Activated CD8-positive, alpha-beta T cell treated with anti-CD3 and anti-CD28 coated beads, Interleukin-2, amount 10 ng/mL, durations not matched to agents 7 days and 5 days (primary cell): ENCODE measurements at regions of chr4 and their contacts with region 1.

Region 1: DNA sequence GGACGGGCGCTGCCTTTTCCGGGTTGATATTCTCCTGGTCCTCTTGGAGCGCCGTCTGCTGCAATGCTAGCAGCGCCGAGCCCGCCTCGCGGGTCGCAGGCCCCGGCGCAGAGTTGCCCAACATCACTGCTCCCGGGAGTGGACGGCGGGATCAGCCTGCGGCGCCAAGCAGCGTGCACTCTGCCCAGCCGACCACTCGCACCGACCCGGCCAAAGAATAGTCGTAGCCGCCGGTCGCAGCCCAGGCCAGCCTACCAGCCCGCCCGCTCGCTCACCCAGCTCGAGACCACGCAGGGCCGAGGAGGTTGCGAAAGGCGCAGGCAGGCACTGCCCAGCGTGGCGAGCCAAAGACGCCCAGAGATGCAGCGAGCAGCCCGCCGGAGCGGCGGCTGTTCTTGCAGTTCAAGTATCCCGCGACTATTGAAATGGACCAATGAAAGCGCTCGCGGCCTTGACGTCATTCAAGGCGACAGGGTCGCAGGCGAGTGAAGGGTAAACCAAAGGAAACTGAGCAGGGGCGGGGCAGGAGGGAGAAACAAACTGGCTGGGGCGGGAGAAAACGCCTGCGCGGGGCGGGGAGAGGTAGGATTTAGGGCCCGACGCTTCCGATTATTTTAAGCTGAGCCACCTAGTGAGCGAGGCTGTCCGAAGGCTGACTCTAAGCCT is at the start of gene CCNA2:
- DNase-seq: peak; percentile 99
- ATAC-seq: peak; percentile 94
- H3K4me3 Mint-ChIP-seq: peak within 1 kb of the TSS; percentile 97
- H3K27ac Mint-ChIP-seq: peak within 1 kb of the TSS; percentile 98
- H3K4me1 Mint-ChIP-seq: peaks cover 34% of the 10 kb centered on the region
- H3K27me3 Mint-ChIP-seq: no peaks in the 10 kb centered on the region
- total RNA-seq, gene CCNA2: 131 to 132 TPM

Region 2: GRCh38 chr4:121777625-121778024 is 46.0 kb before region 1 on chr4:
- CTCF ChIA-PET with region 1: no interaction called
- POLR2A ChIA-PET with region 1: no interaction called
- DNase-seq: no peak
- ATAC-seq: no peak
- H3K4me3 Mint-ChIP-seq: no peak overlapping the region
- H3K27ac Mint-ChIP-seq: no peak overlapping the region
- H3K4me1 Mint-ChIP-seq: no peaks in the 10 kb centered on the region
- H3K27me3 Mint-ChIP-seq: peaks cover 21% of the 10 kb centered on the region

Region 3: DNA sequence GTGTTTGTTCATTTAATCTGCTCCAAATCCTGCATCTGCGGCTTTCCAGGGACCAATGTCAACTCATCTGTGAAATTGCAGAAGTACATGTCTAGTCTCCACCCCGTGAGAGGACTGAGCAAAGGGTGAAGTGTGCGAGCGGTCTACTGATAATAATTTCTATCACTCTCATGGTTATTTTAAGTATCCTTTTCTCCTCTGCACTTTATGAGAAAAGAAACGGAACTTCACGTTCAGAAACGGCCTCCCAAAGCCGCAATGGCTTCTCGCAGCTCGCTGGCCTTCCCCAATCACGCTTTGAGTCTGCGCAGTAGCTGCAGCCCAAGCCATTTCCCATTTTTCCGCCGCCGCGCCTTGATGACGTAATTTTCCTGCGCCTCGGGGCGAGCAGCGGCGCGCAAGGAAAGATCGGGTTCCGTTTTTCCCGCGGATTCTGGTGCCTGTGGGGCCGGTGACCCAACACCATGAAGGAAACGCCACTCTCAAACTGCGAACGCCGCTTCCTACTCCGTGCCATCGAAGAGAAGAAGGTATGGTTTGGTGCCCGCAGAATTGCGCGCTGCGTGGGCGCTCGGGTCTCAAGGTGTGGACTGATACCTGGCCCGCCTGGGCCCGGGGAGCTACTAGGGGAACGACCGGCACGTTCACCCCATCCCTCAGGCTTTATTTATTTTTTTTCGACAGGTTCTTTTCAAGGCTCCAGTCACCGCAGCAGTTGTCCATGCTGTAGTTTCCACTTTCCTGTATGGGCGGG is 22.5 kb before region 1 on chr4 and contains the start of gene EXOSC9:
- CTCF ChIA-PET with region 1: interaction called, 3 read pairs
- POLR2A ChIA-PET with region 1: interaction called, 10 read pairs
- DNase-seq: peak; percentile 94
- ATAC-seq: peak; percentile 88
- H3K4me3 Mint-ChIP-seq: peak within 1 kb of the TSS; percentile 92
- H3K27ac Mint-ChIP-seq: peak within 1 kb of the TSS; percentile 95
- H3K4me1 Mint-ChIP-seq: peaks cover 42% of the 10 kb centered on the region
- H3K27me3 Mint-ChIP-seq: peaks cover 1% of the 10 kb centered on the region
- total RNA-seq, gene EXOSC9: 54.2 to 56.8 TPM

Region 4: DNA sequence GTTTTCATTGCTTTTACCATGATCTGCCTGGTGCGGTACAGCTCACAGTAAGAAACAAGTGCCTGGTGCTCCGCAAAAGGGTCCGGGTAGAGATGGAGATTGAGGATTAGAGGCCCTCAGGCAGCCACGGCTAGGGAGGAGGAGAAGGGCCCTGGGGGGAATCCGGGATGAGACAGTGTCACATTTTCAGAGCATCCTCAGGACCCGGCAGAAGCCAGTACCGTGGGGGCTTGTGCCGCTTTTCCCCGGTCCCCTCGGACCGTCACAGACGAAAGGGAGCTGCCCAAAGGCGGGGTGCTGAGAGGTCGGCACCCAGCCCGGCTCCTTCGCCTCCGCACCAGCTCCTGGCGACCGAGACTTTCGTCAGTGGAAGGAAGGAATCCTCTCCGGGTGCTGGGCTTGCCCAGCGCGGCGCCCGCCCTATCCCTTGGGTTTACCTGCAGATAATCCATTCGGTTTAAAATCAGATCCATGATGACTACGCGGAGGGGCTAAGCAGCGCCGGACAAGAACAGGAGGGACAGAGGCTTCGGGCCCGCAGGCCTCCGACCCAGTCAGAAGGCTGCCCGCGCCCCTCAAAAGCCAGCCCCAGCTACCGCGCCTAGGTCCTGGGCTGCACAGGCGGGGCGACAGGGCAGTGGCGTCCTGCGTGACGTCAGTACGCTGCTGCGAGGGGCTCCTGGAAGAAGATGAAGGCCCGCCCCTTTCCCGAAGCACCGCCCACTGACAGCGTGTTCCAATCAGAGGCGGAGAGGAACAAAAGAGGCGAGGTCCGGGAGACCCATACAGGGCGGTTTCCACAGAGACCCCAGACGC is 46.4 kb after region 1 on chr4 and contains the start of gene BBS7:
- CTCF ChIA-PET with region 1: no interaction called
- POLR2A ChIA-PET with region 1: interaction called, 23 read pairs
- DNase-seq: peak; percentile 98
- ATAC-seq: peak; percentile 99
- H3K4me3 Mint-ChIP-seq: peak within 1 kb of the TSS; percentile 97
- H3K27ac Mint-ChIP-seq: peak within 1 kb of the TSS; percentile 91
- H3K4me1 Mint-ChIP-seq: peaks cover 18% of the 10 kb centered on the region
- H3K27me3 Mint-ChIP-seq: peaks cover 15% of the 10 kb centered on the region
- total RNA-seq, gene BBS7: 16.4 to 18.5 TPM